Dorsolateral prefrontal cortex (tissue), 120 donors: ENCODE measurements at regions of chr9 and their contacts with region 1.

Region 1: DNA sequence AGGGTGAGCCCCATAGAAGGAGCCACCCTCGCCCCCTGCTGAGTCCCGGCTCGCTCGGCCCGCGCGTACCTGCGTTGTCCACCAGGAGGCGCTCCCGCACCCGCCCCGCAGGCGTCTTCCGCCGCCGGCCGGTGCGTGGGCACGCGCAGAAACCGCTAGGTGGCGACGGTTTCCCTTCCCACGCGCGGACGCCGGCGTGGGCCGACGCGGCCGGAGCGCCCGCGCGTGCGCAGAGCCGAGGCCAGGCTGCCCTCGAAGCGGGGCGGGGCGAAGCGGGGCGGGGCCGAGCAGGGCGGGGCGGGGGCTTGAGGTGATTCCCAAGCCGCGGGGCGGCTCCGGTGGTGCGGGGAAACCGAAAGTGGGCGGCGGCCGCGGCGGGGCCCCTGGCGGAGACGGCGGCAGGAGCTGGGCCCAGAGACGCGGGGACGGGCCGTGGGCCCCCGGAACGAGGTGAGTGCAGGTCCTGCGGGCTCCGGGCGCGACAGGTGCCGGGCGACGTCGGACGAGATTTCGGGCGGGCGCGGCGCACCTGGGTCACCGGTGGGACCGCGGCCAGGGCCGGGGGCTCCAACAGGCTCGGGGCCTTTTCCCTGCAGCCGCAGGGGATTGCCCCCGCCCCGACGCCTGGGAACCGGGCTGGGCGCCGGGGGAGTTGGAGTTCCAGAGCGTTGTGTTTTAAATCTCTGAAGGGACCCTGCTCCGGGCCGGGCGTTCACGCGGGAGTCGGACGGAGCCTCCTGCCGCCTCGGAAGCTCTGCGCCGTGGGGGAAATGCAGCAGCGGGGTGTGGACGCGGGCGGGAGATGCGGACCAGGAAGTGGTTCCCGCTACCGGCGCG is at the start of gene TDRD7:
- DNase-seq: peak; percentile 53 to 88 (median 76)
- H3K4me3 ChIP-seq: peak within 1 kb of the TSS; percentile 58 to 100 (median 95)
- H3K27ac ChIP-seq: peak within 1 kb of the TSS in 58 of 59 donors; percentile 0 to 92 (median 82)
- H3K27me3 ChIP-seq: no peaks in the 10 kb centered on the region
- CTCF ChIP-seq: peak; percentile 84 to 100 (median 99)
- total RNA-seq, gene TDRD7: 15.6 to 26.5 (median 20.8) TPM

Region 2: GRCh38 chr9:96854073-96854876 is 557.7 kb before region 1 on chr9 and contains the start of gene ZNF782:
- intact Hi-C with region 1: loop called in 1 of 2 experiments (anchors 5 kb)
- DNase-seq: peak; percentile 88 to 95 (median 93)
- H3K4me3 ChIP-seq: peak within 1 kb of the TSS; percentile 62 to 98 (median 83)
- H3K27ac ChIP-seq: peak within 1 kb of the TSS in 49 of 59 donors; percentile 34 to 88 (median 75)
- H3K27me3 ChIP-seq: no peaks in the 10 kb centered on the region
- CTCF ChIP-seq: peak in 40 of 56 donors; percentile 4 to 68 (median 38)
- total RNA-seq, gene ZNF782: 10.1 to 22.8 (median 15.5) TPM

Region 3: DNA sequence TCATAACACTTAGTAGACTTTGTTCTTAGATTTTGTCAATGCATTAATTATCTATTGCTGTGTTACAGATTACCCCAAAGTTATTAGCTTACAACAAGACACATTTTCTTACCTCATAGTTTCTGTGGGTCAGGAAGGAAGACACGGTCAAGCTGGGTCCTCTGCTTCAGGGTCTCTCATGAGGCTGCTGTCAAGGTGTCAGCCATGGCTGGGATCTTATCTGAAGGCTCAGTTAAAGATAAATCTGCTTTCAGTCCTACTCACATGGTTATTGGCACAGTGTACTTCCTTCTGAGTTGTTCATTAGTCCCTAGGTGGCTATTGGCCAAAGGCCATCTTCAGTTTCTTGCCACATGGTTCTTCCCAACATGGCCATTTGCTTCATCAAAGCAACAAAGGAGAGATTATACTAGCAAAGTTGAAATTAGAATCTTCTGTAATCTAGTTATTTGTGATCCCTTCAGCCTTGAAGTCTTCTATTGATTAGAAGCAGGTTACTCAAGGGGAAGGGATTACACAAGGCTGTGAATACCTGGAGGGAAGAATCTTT is 25.1 kb after region 1 on chr9:
- intact Hi-C with region 1: no loop called
- DNase-seq: no peak
- H3K4me3 ChIP-seq: no peak overlapping the region
- H3K27ac ChIP-seq: no peak overlapping the region
- H3K27me3 ChIP-seq: no peaks in the 10 kb centered on the region
- CTCF ChIP-seq: no peak

Region 4: DNA sequence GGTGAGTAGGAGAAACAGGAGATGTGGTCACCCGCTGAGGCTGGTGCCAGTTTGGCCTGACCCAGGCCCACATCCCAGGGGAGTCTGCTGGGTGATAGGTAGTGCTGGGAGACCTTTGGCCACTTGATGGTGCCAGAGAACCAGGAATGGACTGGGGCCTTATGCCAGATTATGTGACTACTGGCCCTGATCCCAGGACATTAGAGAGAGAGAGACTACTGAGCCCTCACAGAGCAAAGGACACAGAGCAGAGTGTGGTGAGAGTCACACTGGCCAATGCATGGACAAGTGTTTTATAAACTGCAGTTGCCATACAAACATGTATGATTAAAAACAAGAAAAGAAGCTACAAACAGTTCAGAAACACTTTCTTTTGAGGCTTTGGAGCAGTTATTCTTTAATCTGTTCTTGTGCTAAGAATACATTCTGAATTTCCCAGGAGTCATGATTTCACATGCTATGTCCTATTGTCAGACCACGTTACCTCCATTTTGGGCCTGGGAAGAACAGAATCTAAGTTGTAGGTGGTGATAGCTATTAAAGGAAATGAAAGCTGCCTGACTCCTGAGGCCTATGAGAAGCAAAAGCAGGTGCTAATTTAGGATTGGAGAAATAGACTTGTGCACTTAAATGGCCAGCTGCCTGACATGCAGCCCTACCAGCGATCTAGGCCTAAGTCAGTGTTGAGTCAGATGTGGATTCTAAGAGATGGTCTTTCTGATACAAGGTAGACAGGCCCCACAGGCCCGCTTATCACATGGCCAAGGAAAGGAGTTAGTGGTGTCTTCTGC is 56.8 kb after region 1 on chr9:
- intact Hi-C with region 1: loop called in 1 of 2 experiments (anchors 5 kb)
- DNase-seq: peak; percentile 60 to 91 (median 80)
- H3K4me3 ChIP-seq: peak overlapping the region in 1 of 59 donors; percentile 4
- H3K27ac ChIP-seq: peak overlapping the region; percentile 6 to 93 (median 85)
- H3K27me3 ChIP-seq: no peaks in the 10 kb centered on the region
- CTCF ChIP-seq: peak; percentile 49 to 98 (median 90)

Region 5: GRCh38 chr9:97501177-97501971 is 89.4 kb after region 1 on chr9 and contains the start of gene TMOD1:
- intact Hi-C with region 1: loop called in 1 of 2 experiments (anchors 10 kb)
- DNase-seq: peak in 9 of 10 donors; percentile 29 to 81 (median 63)
- H3K4me3 ChIP-seq: peak within 1 kb of the TSS; percentile 64 to 97 (median 85)
- H3K27ac ChIP-seq: peak within 1 kb of the TSS in 57 of 59 donors; percentile 48 to 95 (median 82)
- H3K27me3 ChIP-seq: no peaks in the 10 kb centered on the region
- CTCF ChIP-seq: peak in 21 of 56 donors; percentile 8 to 45 (median 23)
- total RNA-seq, gene TMOD1: 17.3 to 70.1 (median 37.3) TPM

Region 6: DNA sequence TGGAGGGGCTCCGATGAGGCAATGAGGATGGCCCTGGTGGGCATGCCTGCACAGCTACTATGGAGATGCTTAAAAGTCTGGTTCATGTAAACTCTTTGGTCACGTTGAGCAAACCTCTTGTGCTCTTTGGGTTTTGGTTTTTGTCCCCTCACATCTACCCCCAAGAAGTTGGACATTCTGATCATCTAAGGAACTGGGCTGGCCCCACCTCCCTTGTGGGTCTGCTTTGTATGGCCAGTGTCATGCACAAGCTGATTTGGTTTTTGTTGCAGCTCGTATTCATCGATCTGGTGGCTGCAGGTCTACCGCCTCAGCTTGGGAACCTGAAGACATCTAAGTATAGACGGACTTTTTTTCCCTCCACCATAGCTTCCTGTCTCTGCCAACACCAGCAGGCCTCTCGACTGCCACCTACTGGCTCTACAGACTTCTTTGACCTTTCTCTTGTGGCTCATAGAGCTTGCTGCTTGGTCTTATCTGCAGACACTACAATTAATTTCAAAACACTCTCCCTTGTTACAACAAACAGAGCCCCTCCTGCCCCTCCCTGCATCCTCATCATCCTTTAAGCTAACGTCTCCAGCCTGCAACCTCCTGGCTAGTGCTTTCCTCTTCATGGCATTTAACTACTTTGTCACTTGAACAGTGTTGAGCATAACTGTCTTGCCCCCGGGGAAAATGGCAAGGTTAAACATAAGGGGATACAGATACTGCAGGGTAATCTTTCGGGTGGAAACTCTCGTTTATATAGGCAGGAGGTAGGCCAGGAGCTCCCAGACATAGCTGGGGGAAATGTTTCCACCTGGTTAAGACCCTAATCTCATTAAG is 186.7 kb after region 1 on chr9:
- intact Hi-C with region 1: loop called in 1 of 2 experiments (anchors 5 kb)
- DNase-seq: peak; percentile 44 to 88 (median 74)
- H3K4me3 ChIP-seq: no peak overlapping the region
- H3K27ac ChIP-seq: peak overlapping the region in 33 of 59 donors; percentile 3 to 94 (median 40)
- H3K27me3 ChIP-seq: no peaks in the 10 kb centered on the region
- CTCF ChIP-seq: peak; percentile 60 to 92 (median 85)

Region 7: GRCh38 chr9:97615439-97616072 is 203.5 kb after region 1 on chr9:
- intact Hi-C with region 1: loop called (anchors 5 kb)
- DNase-seq: peak in 4 of 10 donors; percentile 56 to 83 (median 74)
- H3K4me3 ChIP-seq: no peak overlapping the region
- H3K27ac ChIP-seq: peak overlapping the region in 25 of 59 donors; percentile 2 to 58 (median 32)
- H3K27me3 ChIP-seq: no peaks in the 10 kb centered on the region
- CTCF ChIP-seq: peak; percentile 80 to 97 (median 91)

Region 8: DNA sequence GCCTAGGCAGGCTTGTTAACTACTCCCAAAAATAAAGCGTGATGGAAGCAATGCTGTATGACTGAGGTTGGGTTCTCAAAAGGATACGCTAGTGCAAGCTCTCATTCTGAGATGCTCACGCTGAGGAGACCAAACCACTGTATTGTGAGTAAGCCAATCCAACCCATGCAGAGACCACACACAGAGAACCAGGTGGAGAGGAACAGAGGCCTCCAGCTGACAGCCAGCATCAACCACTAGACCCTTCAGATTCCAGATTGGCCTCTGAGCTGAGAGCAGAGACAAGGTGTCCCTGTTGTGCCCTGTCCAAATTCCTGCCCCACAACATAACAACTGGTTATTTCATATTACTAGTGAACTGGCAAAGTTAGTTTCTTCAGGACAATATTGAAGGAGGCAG is 216.7 kb after region 1 on chr9:
- intact Hi-C with region 1: no loop called
- DNase-seq: no peak
- H3K4me3 ChIP-seq: no peak overlapping the region
- H3K27ac ChIP-seq: no peak overlapping the region
- H3K27me3 ChIP-seq: no peaks in the 10 kb centered on the region
- CTCF ChIP-seq: no peak

Region 9: DNA sequence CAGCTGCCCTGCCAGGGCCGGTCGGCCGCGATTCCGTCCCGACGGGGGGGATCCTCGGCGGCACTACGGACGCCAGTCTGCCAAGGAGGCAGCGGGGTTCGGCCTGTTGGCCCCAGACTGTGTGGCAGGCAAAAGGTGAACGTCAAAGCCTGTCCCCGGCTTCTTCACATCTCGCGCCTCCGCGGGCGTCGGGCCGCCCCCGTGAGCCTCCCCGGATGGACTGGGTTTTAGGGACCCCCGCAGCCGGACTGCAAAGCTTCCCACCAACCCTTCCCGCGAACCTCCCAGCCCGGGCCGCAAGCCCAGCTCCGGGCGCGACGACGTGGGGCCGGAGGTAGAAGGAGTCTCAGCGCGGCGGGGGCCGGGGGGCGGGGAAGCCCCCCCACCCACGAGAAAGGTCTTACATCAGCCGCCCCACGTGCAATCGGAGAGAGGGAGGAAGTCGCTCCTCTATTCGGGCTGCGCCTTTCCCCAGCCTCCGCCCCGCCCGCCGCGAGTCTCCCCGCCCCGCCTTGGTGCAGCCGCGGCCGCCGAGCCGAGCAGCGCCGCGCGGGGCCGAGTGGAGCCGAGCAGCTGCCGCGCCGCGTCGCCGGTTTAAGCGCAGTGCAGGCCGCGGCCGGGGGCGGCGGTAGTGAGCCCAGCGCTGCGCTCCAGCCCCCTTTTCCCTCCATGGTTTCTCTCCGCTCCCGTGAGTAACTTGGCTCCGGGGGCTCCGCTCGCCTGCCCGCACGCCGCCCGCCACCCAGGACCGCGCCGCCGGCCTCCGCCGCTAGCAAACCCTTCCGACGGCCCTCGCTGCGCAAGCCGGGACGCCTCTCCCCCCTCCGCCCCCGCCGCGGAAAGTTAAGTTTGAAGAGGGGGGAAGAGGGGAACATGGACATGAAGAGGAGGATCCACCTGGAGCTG is 570.9 kb after region 1 on chr9 and contains the start of gene ANP32B:
- intact Hi-C with region 1: loop called in 1 of 2 experiments (anchors 5 kb)
- DNase-seq: peak; percentile 83 to 95 (median 88)
- H3K4me3 ChIP-seq: peak within 1 kb of the TSS; percentile 64 to 96 (median 89)
- H3K27ac ChIP-seq: peak within 1 kb of the TSS; percentile 80 to 100 (median 98)
- H3K27me3 ChIP-seq: no peaks in the 10 kb centered on the region
- CTCF ChIP-seq: peak; percentile 49 to 98 (median 80)
- total RNA-seq, gene ANP32B: 41.2 to 135 (median 66.8) TPM